HEK293 (cell line): ENCODE measurements at regions of chr22 and their contacts with region 1.

Region 1: GRCh38 chr22:22770280-22770871 is 117.2 kb upstream of the IGLL5 start:
- H3K4me3 ChIP-seq: no peak overlapping the region
- H3K27ac ChIP-seq: no peak overlapping the region
- H3K4me1 ChIP-seq: no peaks in the 10 kb centered on the region
- CTCF ChIP-seq: peak; percentile 56

Region 2: GRCh38 chr22:22195265-22196017 is 574.9 kb before region 1 on chr22:
- CTCF ChIA-PET with region 1: interaction called, 10 read pairs
- POLR2A ChIA-PET with region 1: no interaction called
- H3K4me3 ChIP-seq: no peak overlapping the region
- H3K27ac ChIP-seq: no peak overlapping the region
- H3K4me1 ChIP-seq: no peaks in the 10 kb centered on the region
- CTCF ChIP-seq: peak; percentile 84

Region 3: GRCh38 chr22:22558972-22559603 is 211.3 kb before region 1 on chr22 and contains the start of gene PRAME:
- CTCF ChIA-PET with region 1: no interaction called
- POLR2A ChIA-PET with region 1: no interaction called
- H3K4me3 ChIP-seq: no peak within 1 kb of the TSS
- H3K27ac ChIP-seq: no peak within 1 kb of the TSS
- H3K4me1 ChIP-seq: no peaks in the 10 kb centered on the region
- CTCF ChIP-seq: peak; percentile 92

Region 4: DNA sequence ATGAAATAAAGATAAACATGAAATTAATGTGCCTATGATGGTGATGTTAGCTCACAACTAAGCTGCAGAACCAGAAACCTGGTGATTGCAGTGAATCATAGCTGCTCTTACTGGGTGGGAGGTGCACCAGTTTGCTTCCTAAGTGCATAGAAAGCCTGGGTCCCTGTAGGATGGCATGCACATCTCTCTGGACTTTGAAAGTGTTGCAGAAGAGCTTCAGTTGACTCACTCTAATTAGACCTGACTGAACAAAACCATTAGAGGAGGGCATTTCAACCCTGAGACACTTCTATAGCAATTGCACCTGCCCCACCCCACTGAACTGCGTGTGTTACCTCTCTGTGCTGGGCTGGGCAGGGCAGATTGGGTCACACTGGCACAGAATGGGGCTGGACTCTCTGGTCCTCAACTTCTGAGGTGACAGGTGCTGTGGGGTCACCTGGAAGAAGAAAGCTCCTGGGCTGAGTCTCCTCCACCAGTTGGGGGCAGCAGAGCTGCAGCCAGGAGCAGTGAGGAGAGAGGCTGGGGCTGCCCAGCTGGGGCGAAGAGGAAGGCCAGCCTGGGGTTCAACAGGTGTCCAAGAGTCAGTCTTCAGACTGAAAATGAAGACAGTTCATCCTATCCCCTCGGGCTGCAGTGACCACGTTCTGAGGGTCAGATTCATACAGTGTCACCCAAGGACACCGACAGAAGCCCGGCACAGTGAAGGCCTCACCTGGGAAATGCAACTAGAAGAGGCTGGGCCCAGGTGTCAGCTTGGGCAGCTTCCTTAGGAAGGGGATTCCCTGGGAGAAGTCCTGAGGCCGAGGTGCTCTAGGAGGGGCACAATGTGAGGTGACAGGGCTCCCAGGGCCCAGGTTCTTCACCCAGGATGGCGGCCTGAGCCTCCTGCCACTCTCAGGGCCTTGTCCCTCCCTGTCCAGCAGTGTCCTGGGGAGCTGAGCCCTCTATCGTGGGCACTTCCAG is 67.9 kb before region 1 on chr22:
- CTCF ChIA-PET with region 1: interaction called, 15 read pairs
- POLR2A ChIA-PET with region 1: no interaction called
- H3K4me3 ChIP-seq: no peak overlapping the region
- H3K27ac ChIP-seq: no peak overlapping the region
- H3K4me1 ChIP-seq: no peaks in the 10 kb centered on the region
- CTCF ChIP-seq: 0 out of 2 replicates have a peak, but pooled peaks have one; percentile 18

Region 5: DNA sequence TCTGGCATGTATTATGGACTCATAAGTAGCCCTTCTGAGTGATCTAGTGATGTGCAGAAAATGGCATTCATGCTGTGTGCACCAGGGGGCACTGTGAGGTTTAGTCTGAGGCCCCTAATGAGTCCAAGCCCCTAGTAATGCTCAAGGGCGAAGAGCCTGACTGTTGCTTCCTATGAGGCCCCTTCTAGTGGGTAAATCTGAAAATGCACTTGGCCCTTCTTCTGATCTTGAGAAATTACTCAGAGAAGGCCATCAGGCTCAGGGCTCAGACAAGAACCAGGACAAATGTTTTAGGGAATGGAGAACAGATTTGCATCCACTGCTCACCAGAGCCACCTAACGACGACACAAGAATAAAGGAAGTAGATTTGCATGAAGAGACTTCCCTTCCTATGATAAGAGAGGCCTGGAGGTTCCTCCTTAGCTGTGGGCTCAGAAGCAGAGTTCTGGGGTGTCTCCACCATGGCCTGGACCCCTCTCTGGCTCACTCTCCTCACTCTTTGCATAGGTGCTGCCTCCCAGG is 50.1 kb before region 1 on chr22:
- CTCF ChIA-PET with region 1: interaction called, 13 read pairs
- POLR2A ChIA-PET with region 1: no interaction called
- H3K4me3 ChIP-seq: no peak overlapping the region
- H3K27ac ChIP-seq: no peak overlapping the region
- H3K4me1 ChIP-seq: no peaks in the 10 kb centered on the region
- CTCF ChIP-seq: peak; percentile 10; the same call in 1 of the 2 replicates

Region 6: GRCh38 chr22:22753526-22754267 is 16.7 kb before region 1 on chr22:
- CTCF ChIA-PET with region 1: interaction called, 59 read pairs
- POLR2A ChIA-PET with region 1: no interaction called
- H3K4me3 ChIP-seq: no peak overlapping the region
- H3K27ac ChIP-seq: no peak overlapping the region
- H3K4me1 ChIP-seq: no peaks in the 10 kb centered on the region
- CTCF ChIP-seq: peak; percentile 57; the same call in 1 of the 2 replicates

Region 7: DNA sequence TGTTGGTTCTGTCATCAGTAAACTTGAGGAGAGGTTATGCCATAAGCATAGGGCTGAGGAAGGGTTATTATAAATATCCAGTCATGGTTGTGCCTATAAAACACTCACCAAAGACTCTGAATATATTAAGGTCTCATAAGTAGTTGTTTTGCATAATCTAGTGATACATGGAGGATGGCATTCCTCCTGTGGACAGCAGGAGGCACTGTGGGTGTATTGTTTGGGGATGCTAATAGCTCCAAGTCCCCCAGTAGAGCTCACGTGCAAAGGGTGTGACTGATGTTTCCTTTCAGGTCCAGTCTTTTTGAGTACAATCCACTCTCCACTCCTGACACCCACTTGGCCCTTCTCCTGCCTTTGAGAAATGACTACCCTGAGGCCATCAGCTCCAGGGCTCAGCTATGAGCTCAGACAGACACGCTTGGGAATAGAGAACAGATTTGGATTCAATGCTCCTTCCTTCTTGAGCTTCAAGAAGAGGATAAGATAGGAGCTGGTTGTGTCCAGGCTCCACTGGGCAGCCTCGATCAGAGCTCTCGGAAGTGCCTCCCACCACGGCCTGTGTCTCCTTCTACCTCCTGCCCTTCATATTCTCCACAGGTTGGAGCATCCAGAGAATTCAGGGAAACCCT is 32.1 kb after region 1 on chr22:
- CTCF ChIA-PET with region 1: interaction called, 10 read pairs
- POLR2A ChIA-PET with region 1: no interaction called
- H3K4me3 ChIP-seq: no peak overlapping the region
- H3K27ac ChIP-seq: no peak overlapping the region
- H3K4me1 ChIP-seq: no peaks in the 10 kb centered on the region
- CTCF ChIP-seq: no peak

Region 8: DNA sequence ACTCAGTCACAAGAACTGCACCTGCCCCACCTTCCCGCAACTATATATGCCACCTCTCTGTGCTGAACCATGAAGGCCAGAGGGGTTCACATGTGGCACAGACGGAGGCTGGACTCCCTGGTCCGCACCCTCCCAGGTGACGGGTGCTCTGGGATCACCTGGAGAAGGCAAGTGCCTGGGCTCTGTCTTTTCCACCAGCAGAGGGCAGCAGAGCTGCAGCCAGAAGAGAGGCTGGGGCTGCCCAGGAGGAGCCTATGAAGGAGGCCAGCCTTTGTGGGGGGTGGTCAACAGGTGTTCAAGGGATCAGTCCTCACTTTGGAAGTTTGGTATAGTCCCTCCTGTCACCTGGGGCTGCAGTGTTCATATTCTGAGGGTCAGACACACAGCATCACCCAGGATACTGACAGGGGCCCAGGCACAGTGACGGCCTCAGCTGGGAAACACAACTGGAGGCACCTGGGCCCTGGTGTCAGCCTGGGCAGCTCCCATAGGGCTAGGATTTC is 78.0 kb after region 1 on chr22:
- CTCF ChIA-PET with region 1: interaction called, 17 read pairs
- POLR2A ChIA-PET with region 1: no interaction called
- H3K4me3 ChIP-seq: no peak overlapping the region
- H3K27ac ChIP-seq: no peak overlapping the region
- H3K4me1 ChIP-seq: no peaks in the 10 kb centered on the region
- CTCF ChIP-seq: peak; percentile 81

Region 9: GRCh38 chr22:23012081-23012622 is 241.8 kb after region 1 on chr22:
- CTCF ChIA-PET with region 1: no interaction called
- POLR2A ChIA-PET with region 1: no interaction called
- H3K4me3 ChIP-seq: no peak overlapping the region
- H3K27ac ChIP-seq: no peak overlapping the region
- H3K4me1 ChIP-seq: no peaks in the 10 kb centered on the region
- CTCF ChIP-seq: no peak

Region 10: DNA sequence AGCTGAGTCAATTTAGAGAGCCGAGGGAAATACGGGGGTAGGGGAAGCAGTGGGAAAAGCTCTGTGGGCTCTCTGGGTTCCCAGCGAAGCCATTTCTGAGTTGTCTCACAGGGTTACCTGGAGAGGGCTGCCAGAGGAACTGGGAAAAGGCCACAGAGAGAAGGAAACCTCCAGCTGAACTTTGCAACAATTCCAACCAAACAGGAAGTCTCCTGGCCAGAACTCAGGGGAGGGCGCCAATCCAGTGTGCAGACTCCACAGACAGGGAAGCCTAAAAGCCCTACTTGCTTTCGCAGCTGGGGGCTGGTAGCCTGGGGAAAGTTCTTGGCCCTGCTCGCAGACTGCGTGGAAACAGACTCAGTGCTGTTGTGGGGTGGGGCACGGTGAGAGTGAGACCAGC is 276.9 kb after region 1 on chr22:
- CTCF ChIA-PET with region 1: no interaction called
- POLR2A ChIA-PET with region 1: no interaction called
- H3K4me3 ChIP-seq: no peak overlapping the region
- H3K27ac ChIP-seq: no peak overlapping the region
- H3K4me1 ChIP-seq: no peaks in the 10 kb centered on the region
- CTCF ChIP-seq: no peak